Left colon (tissue), 2 donors: ENCODE measurements at regions of chr6 and their contacts with region 1.

Region 1: GRCh38 chr6:39302669-39303424 is 11.4 kb downstream of the KCNK17 start:
- DNase-seq: peak; percentile 78 to 97
- ATAC-seq: peak; percentile 95

Region 2: GRCh38 chr6:38871741-38872568 is 430.9 kb before region 1 on chr6:
- intact Hi-C with region 1: loop called in 1 of 2 experiments (anchors 10 kb)
- DNase-seq: peak in 1 of 2 donors; percentile 48
- ATAC-seq: peak; percentile 56

Region 3: GRCh38 chr6:38973178-38974054 is 329.4 kb before region 1 on chr6:
- intact Hi-C with region 1: loop called in 1 of 2 experiments (anchors 10 kb)
- DNase-seq: no peak
- ATAC-seq: peak; percentile 62

Region 4: GRCh38 chr6:39128106-39128505 is 174.7 kb before region 1 on chr6:
- intact Hi-C with region 1: no loop called
- DNase-seq: no peak
- ATAC-seq: no peak

Region 5: DNA sequence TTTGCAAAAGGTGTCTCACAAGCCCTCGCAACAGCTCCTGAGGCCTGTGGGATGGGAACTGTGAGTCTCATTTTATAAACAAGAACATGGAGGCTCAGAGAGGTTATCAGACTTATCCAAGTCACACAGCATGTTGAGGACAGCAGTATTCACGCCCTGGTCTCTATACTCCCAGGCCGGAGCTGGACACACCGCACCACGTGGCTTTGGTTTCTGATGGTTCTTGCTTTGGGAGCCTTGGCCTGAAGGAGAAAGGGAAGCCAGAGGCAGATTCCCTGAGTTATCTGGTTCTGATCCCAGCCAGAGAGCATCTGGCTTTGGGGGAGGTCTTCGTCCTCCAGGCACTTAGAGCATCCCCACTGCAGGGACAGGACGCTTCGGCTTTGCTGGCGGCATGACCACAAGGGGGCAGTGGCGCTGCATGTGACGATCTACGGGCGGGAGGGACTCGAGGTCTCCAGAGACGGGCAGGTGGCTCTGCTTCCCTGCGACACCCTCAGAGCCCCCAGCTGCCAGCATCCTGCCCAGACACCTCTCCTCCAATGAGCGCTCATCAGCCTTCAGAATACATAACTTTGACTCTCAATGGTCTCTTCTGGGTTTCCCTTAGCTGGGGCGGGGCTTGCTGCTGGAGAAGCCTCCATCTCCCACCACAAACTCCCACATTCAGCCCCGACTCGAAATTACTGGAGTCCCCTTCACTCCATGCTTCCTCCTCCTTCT is 136.5 kb before region 1 on chr6:
- intact Hi-C with region 1: loop called (anchors 5 kb)
- DNase-seq: peak; percentile 69 to 89
- ATAC-seq: peak; percentile 66